CD4-positive, alpha-beta T cell (primary cell): ENCODE measurements at regions of chr7 and their contacts with region 1.

Region 1: GRCh38 chr7:25565949-25566348 is 337.7 kb upstream of the NPVF start:
- DNase-seq: peak; percentile 41 to 86 (median 59)
- ATAC-seq: peak; percentile 61
- H3K4me3 ChIP-seq: no peak overlapping the region
- H3K4me3 Mint-ChIP-seq: no peak overlapping the region
- H3K27ac ChIP-seq: no peak overlapping the region
- H3K27ac Mint-ChIP-seq: no peak overlapping the region
- H3K4me1 ChIP-seq: no peaks in the 10 kb centered on the region
- H3K4me1 Mint-ChIP-seq: peaks cover 7% of the 10 kb centered on the region
- H3K27me3 ChIP-seq: no peaks in the 10 kb centered on the region
- H3K27me3 Mint-ChIP-seq: no peaks in the 10 kb centered on the region
- CTCF ChIP-seq: peak; percentile 100

Region 2: DNA sequence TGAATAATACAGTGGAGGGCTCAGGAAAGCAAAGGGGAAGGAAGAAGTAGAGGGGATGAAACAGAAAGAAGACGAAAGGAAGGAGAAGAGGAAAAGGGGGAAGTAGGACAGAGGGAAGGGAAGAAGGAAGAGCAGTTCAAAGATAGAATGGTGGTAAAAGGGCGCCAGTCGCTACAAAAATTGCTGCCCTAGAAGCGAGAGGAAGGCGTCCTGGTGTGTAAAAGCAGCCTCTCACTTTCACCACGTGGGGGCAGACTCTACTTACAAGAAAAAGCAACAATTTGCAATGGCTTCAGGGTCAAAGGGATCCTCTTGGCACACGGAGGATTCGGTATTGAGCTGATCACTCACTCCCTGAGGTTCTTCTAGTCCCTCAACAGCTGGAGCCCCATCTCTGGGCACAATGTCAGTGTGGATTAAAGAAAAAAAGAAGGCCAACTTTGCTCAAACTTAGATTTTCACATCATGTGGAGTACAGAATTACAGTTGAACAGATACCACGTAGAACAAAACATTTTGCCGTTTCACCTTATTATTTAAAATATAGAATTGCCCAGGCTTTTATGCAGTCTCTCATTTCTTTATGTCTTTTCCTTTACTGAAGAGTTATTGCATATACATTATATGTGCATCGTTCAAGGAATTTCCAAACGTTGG is 306.2 kb before region 1 on chr7:
- CTCF ChIA-PET with region 1: interaction called, 10 read pairs
- POLR2A ChIA-PET with region 1: interaction called, 10 read pairs
- intact Hi-C with region 1: loop called (anchors 1 kb)
- DNase-seq: peak; percentile 35 to 86 (median 57)
- ATAC-seq: peak; percentile 71
- H3K4me3 ChIP-seq: no peak overlapping the region
- H3K4me3 Mint-ChIP-seq: peak overlapping the region; percentile 76
- H3K27ac ChIP-seq: no peak overlapping the region
- H3K27ac Mint-ChIP-seq: peak overlapping the region; percentile 60
- H3K4me1 ChIP-seq: peaks cover 9% of the 10 kb centered on the region
- H3K4me1 Mint-ChIP-seq: peaks cover 33% of the 10 kb centered on the region
- H3K27me3 ChIP-seq: no peaks in the 10 kb centered on the region
- H3K27me3 Mint-ChIP-seq: no peaks in the 10 kb centered on the region
- CTCF ChIP-seq: peak; percentile 82

Region 3: GRCh38 chr7:25597946-25598345 is 32.0 kb after region 1 on chr7:
- CTCF ChIA-PET with region 1: no interaction called
- POLR2A ChIA-PET with region 1: no interaction called
- intact Hi-C with region 1: no loop called
- DNase-seq: no peak
- ATAC-seq: no peak
- H3K4me3 ChIP-seq: no peak overlapping the region
- H3K4me3 Mint-ChIP-seq: no peak overlapping the region
- H3K27ac ChIP-seq: no peak overlapping the region
- H3K27ac Mint-ChIP-seq: no peak overlapping the region
- H3K4me1 ChIP-seq: no peaks in the 10 kb centered on the region
- H3K4me1 Mint-ChIP-seq: no peaks in the 10 kb centered on the region
- H3K27me3 ChIP-seq: no peaks in the 10 kb centered on the region
- H3K27me3 Mint-ChIP-seq: no peaks in the 10 kb centered on the region
- CTCF ChIP-seq: no peak